GM10248 (cell line): ENCODE measurements at regions of chr14 and their contacts with region 1.

Region 1: GRCh38 chr14:58107947-58108552 is 44.0 kb downstream of the ARMH4 start:
- DNase-seq: peak; percentile 43
- CTCF ChIP-seq: peak; percentile 66

Region 2: GRCh38 chr14:57889245-57889644 is 218.8 kb before region 1 on chr14:
- CTCF ChIA-PET with region 1: no interaction called
- POLR2A ChIA-PET with region 1: no interaction called
- DNase-seq: no peak
- CTCF ChIP-seq: no peak

Region 3: GRCh38 chr14:58118097-58118815 is 10.2 kb after region 1 on chr14:
- CTCF ChIA-PET with region 1: interaction called, 13 read pairs
- POLR2A ChIA-PET with region 1: no interaction called
- DNase-seq: no peak
- CTCF ChIP-seq: no peak

Region 4: GRCh38 chr14:58215191-58215914 is 107.3 kb after region 1 on chr14:
- CTCF ChIA-PET with region 1: no interaction called
- POLR2A ChIA-PET with region 1: no interaction called
- DNase-seq: no peak
- CTCF ChIP-seq: no peak